A673 (cell line): ENCODE measurements at regions of chr3 and their contacts with region 1.

Region 1: DNA sequence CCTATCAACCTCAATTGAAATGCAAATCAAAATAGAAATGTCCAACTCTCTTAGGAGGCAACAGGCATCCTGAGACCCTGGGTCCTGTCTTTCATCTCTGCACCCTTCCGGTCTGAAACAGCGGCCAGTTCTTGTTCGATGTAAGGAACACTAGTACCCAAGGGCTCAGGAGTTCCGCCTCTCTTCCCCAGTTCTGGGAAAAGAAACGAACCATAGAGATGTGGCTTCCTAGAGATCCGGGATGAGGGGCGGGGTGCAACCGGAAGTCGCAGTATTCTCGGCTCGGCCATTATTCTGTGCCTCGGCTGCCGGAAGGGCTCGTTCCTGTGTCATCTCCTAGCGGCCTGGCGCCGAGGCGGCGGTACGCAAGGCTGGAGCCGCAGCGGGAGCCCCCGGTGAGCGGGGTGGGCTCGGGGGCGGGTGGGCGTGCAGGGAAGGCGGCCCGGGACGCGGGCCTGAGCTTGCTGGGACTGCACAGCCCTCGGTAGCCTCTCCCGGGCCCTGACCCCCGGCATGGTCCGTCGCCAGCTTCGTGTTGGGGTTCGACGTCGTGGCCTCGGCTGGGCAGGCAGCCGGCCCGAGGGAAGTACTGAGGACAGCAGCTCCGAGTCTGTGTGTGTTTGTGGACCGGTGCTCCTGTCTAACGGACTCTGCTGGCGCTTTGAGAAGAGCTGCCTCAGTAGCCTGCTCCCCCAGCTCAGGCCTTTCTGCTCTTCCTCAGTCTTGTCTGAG is at the start of gene ZNF197:
- DNase-seq: peak; percentile 90
- H3K4me3 ChIP-seq: peak within 1 kb of the TSS; percentile 71
- H3K27ac ChIP-seq: peak within 1 kb of the TSS; percentile 65
- H3K4me1 ChIP-seq: no peaks in the 10 kb centered on the region
- H3K27me3 ChIP-seq: no peaks in the 10 kb centered on the region
- CTCF ChIP-seq: no peak
- total RNA-seq, gene ZNF197: 14.0 and 14.3 TPM in 2 replicates

Region 2: GRCh38 chr3:44648564-44649229 is 23.8 kb after region 1 on chr3 and contains the start of gene ZNF35:
- CTCF ChIA-PET with region 1: no interaction called
- POLR2A ChIA-PET with region 1: no interaction called
- intact Hi-C with region 1: loop called (anchors 1 kb)
- DNase-seq: peak; percentile 80
- H3K4me3 ChIP-seq: peak within 1 kb of the TSS; percentile 77
- H3K27ac ChIP-seq: peak within 1 kb of the TSS; percentile 81
- H3K4me1 ChIP-seq: no peaks in the 10 kb centered on the region
- H3K27me3 ChIP-seq: no peaks in the 10 kb centered on the region
- CTCF ChIP-seq: no peak
- total RNA-seq, gene ZNF35: 11.3 and 13.0 TPM in 2 replicates